GM13976 (cell line): ENCODE measurements at regions of chrX and their contacts with region 1.

Region 1: GRCh38 chrX:79081895-79082512 is 62.5 kb upstream of the GPR174 start:
- DNase-seq: peak; percentile 29
- CTCF ChIP-seq: peak; percentile 47

Region 2: DNA sequence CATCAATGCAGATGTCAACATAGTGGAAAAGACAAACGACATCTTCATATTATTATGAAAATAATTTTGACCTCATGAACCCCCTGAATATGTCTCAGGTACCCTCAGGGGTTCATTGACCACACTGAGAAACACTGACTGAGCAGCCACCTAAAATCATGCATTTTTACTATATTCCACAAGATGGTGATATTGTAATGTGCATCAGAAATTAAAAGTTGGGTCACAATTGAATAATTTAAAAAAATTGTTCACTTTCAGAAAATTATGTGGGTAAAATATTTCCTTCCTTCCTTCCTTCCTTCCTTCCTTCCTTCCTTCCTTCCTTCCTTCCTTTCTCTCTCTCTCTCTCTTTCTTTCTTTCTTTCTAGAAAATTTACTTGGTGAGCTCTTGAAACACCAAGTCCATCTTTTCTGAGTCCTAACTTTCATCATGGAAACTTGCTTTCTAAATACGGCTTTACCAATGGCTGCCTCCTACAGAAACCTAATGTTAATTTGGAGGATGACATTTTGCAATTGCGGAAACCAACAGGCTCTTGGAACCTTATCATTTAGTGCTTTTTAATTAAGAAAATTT is 526.5 kb before region 1 on chrX:
- in situ Hi-C with region 1: loop called (anchors 25 kb)
- DNase-seq: peak; percentile 2
- CTCF ChIP-seq: no peak

Region 3: DNA sequence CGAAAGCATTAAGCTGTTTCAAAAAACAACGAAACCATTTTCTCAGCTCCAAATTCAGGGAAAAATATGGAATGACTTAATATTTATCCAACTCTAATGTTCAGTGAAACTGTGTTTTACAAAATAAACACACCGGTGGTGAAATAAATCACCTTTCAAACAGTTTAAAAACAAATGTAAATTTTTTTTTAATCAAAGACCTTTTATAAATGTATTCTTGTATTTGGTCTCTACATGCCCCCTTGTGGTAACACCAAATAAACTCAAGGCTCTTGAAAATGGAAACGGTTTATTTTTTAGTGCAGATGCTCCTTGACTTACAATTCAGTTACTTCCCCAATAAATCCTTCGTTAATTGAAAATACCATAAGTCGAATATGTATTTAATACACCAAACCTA is 331.0 kb after region 1 on chrX:
- in situ Hi-C with region 1: loop called (anchors 25 kb)
- DNase-seq: peak; percentile 15
- CTCF ChIP-seq: peak; percentile 16